ENCODE measurements at regions of chr12 and their contacts with region 1.

Region 1: GRCh38 chr12:132828706-132829534 is at the start of gene GOLGA3:
- DNase-seq: peak; percentile 93
- H3K4me3 ChIP-seq: peak within 1 kb of the TSS; percentile 76 to 89
- H3K27ac ChIP-seq: peak within 1 kb of the TSS; percentile 92 to 99
- H3K4me1 ChIP-seq: peaks cover 5% of the 10 kb centered on the region
- H3K27me3 ChIP-seq: no peaks in the 10 kb centered on the region
- CTCF ChIP-seq: no peak
- POLR2A ChIP-seq: peak; percentile 51
- total RNA-seq, gene GOLGA3: 99.1 to 109 TPM

Region 2: GRCh38 chr12:132766380-132767085 is 62.4 kb before region 1 on chr12:
- intact Hi-C with region 1: loop called (anchors 5 kb)
- DNase-seq: no peak
- H3K4me3 ChIP-seq: no peak overlapping the region
- H3K27ac ChIP-seq: no peak overlapping the region
- H3K4me1 ChIP-seq: no peaks in the 10 kb centered on the region
- H3K27me3 ChIP-seq: no peaks in the 10 kb centered on the region
- CTCF ChIP-seq: no peak
- POLR2A ChIP-seq: no peak

Region 3: GRCh38 chr12:132887513-132888351 is 58.8 kb after region 1 on chr12 and contains the start of gene CHFR:
- intact Hi-C with region 1: loop called (anchors 5 kb)
- DNase-seq: peak; percentile 97
- H3K4me3 ChIP-seq: peak within 1 kb of the TSS; percentile 59 to 73
- H3K27ac ChIP-seq: peak within 1 kb of the TSS; percentile 81 to 87
- H3K4me1 ChIP-seq: no peaks in the 10 kb centered on the region
- H3K27me3 ChIP-seq: no peaks in the 10 kb centered on the region
- CTCF ChIP-seq: no peak
- POLR2A ChIP-seq: peak; percentile 31
- total RNA-seq, gene CHFR: 18.7 to 52.3 TPM